ENCODE measurements at regions of chr3 and their contacts with region 1.

Region 1: GRCh38 chr3:143192193-143192592 is 72.6 kb downstream of the CHST2 start:
- DNase-seq: no peak
- ATAC-seq: no peak
- H3K4me3 ChIP-seq: no peak overlapping the region
- H3K4me3 Mint-ChIP-seq: peak overlapping the region; percentile 49
- H3K27ac ChIP-seq: no peak overlapping the region
- H3K27ac Mint-ChIP-seq: peak overlapping the region; percentile 8
- H3K4me1 ChIP-seq: peaks cover 14% of the 10 kb centered on the region
- H3K4me1 Mint-ChIP-seq: peaks cover 28% of the 10 kb centered on the region
- H3K27me3 ChIP-seq: no peaks in the 10 kb centered on the region
- H3K27me3 Mint-ChIP-seq: no peaks in the 10 kb centered on the region
- CTCF ChIP-seq: no peak

Region 2: DNA sequence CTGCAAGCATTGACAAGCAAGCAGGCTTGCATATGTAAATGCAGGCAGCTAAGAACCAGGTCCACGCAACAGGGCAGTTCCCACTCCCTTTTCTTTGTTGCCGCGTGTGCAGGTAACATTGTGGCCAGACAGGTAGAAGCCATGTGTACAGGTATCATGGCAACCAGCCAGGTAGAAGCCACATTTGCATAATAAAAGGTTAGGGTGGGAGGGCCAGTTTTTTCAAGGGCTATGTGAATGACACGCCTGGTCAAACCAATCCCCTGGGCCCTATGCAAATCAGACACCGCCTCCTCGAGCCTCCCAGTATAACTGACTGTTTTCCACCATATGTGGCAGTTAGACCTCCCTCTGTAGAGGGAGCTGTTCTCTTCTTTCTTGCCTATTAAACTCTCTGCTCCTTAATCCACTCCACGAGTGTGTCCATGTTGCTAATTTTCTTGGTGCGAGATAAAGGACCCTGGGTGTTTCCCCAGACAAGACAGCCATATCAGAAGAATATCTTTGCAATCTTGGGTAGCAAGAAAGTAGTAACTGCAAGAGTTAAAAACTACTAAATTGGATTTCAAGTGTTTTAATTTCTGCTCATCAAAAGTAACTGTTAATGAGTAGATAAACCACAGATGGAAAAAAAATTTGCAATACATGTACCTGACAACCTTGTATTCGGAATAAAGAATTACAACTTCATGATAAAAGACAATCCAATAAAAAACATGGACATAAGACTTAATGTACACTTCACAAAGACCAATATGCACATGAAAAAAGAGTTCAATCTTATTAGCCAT is 325.2 kb before region 1 on chr3:
- CTCF ChIA-PET with region 1: no interaction called
- POLR2A ChIA-PET with region 1: no interaction called
- intact Hi-C with region 1: no loop called
- DNase-seq: no peak
- ATAC-seq: no peak
- H3K4me3 ChIP-seq: no peak overlapping the region
- H3K4me3 Mint-ChIP-seq: no peak overlapping the region
- H3K27ac ChIP-seq: no peak overlapping the region
- H3K27ac Mint-ChIP-seq: no peak overlapping the region
- H3K4me1 ChIP-seq: no peaks in the 10 kb centered on the region
- H3K4me1 Mint-ChIP-seq: peaks cover 5% of the 10 kb centered on the region
- H3K27me3 ChIP-seq: no peaks in the 10 kb centered on the region
- H3K27me3 Mint-ChIP-seq: peaks cover 9% of the 10 kb centered on the region
- CTCF ChIP-seq: no peak

Region 3: DNA sequence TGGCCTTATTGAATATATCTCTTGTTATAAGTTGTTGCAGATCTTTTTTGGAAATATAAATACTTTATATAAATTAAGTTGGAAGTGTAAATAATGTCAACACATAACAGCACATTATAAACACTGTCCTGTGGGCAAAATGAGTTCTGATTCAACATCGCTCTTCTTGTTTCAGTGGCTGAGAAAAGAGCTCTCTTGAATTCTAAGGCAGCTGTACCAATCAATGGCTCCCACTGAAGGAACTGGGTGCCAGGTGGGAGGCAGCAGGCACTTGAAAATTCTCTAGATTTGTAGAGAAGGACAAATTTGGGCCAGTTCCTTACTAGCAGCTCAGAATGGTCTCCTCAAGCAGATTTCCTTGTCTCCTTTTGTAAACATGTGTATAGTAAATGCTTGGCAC is 27.0 kb before region 1 on chr3:
- CTCF ChIA-PET with region 1: no interaction called
- POLR2A ChIA-PET with region 1: no interaction called
- intact Hi-C with region 1: loop called in 1 of 2 experiments (anchors 1 kb)
- DNase-seq: no peak
- ATAC-seq: no peak
- H3K4me3 ChIP-seq: no peak overlapping the region
- H3K4me3 Mint-ChIP-seq: no peak overlapping the region
- H3K27ac ChIP-seq: no peak overlapping the region
- H3K27ac Mint-ChIP-seq: peak overlapping the region; percentile 66
- H3K4me1 ChIP-seq: peaks cover 43% of the 10 kb centered on the region
- H3K4me1 Mint-ChIP-seq: peaks cover 62% of the 10 kb centered on the region
- H3K27me3 ChIP-seq: no peaks in the 10 kb centered on the region
- H3K27me3 Mint-ChIP-seq: no peaks in the 10 kb centered on the region
- CTCF ChIP-seq: no peak